ENCODE measurements at regions of chr9 and their contacts with region 1.

Region 1: DNA sequence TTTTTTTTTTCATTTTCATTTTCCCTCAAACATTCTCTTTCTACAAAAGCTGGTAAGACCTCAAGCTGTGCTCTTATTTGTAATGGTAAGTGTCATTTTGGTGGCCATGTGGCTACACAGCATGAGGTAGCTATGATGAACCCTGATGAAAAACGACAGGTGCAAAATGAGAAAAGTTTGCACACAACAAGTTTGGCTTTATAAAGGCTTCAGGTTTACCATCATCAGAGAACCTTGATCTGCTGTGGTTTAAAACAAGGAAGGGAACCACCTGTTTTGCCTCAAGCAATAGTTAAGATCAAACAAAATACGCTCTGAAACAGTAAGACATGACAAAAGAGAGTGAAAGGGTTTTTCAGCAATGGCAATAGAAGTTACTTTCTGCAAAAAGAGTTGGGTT is 1124.6 kb upstream of the ACO1 start:
- DNase-seq: no peak
- ATAC-seq: no peak
- H3K4me3 ChIP-seq: no peak overlapping the region
- H3K27ac ChIP-seq: no peak overlapping the region
- H3K4me1 ChIP-seq: no peaks in the 10 kb centered on the region
- H3K27me3 ChIP-seq: no peaks in the 10 kb centered on the region
- CTCF ChIP-seq: no peak
- POLR2A ChIP-seq: no peak
- RAD21 ChIP-seq: no peak

Region 2: DNA sequence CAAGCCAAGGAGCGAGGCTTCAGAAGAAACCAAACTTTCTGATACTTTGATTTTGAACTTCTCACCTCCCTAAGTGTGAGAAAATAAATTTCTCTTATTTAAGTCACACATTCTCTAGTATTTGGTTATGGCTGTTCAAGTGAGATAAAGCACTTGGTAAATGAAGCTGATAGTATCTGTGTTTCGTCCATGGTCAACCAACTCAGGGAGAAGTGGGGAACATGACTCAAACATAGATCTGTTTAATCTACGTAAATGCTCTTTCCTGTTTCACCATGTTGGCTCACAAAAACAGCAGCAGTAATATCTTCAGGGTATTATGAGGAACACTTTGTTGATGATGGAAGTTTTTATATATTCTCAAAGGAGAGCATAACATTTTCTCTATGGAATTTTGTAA is 1519.3 kb before region 1 on chr9:
- CTCF ChIA-PET with region 1: no interaction called
- POLR2A ChIA-PET with region 1: no interaction called
- dilution Hi-C with region 1: no loop called
- in situ Hi-C with region 1: no loop called
- intact Hi-C with region 1: loop called (anchors 5 kb)
- DNase-seq: no peak
- ATAC-seq: no peak
- H3K4me3 ChIP-seq: no peak overlapping the region
- H3K27ac ChIP-seq: no peak overlapping the region
- H3K4me1 ChIP-seq: no peaks in the 10 kb centered on the region
- H3K27me3 ChIP-seq: no peaks in the 10 kb centered on the region
- CTCF ChIP-seq: no peak
- POLR2A ChIP-seq: no peak
- RAD21 ChIP-seq: no peak

Region 3: DNA sequence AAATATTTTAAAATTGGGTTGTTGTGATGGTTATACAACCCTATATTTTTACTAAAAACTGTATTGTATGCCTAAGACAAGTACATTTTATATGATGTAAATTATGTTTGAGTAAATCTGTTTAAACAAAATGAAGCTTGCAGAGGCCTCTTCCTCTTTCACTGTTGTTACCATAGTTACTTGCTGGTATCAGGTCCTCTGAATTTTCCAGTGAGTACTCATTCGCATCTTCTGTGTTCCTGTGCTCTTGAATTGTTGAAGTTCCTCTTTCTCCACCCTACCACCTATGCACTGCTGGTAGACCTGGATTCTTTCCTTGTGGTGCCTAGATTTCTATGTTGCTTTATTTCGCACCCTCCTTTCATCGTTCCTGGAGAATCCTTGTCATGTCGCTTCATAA is 186.1 kb after region 1 on chr9:
- CTCF ChIA-PET with region 1: no interaction called
- POLR2A ChIA-PET with region 1: no interaction called
- dilution Hi-C with region 1: no loop called
- in situ Hi-C with region 1: no loop called
- intact Hi-C with region 1: no loop called
- DNase-seq: no peak
- ATAC-seq: no peak
- H3K4me3 ChIP-seq: no peak overlapping the region
- H3K27ac ChIP-seq: no peak overlapping the region
- H3K4me1 ChIP-seq: no peaks in the 10 kb centered on the region
- H3K27me3 ChIP-seq: no peaks in the 10 kb centered on the region
- CTCF ChIP-seq: no peak
- POLR2A ChIP-seq: no peak
- RAD21 ChIP-seq: no peak